AG04450 (cell line): ENCODE measurements at regions of chr7 and their contacts with region 1.

Region 1: DNA sequence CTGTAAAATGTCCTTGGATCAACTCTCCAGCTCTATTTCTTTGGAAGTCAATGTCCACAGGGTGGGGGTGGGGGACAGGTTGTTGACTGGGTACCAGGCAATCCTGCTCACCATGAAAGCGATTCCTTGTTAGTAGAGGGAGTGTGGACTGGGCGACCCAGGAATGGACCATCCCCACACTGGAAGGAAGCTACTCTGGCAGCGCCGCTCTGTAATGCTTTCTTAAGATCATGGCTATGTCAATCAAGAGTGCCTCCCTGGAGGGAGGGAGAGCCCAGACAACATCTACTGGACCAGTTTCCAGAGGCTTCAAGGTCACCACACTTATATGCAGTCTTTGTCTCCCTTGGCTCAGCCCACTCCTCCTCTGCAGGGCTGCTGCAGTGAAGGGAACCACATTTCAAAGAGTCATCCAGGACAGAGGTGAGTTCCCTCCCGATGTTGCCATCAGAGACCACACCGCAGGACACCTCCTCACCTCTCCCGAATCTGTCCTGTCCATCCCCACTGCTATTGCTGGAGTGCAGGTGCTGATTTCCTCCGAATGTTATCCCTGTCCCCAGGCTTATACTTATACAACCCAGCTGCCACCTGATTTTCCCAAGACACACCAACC is 6.9 kb downstream of the GIMAP5 start:
- DNase-seq: no peak
- H3K4me3 ChIP-seq: no peak overlapping the region
- H3K27ac ChIP-seq: no peak overlapping the region
- H3K27me3 ChIP-seq: no peaks in the 10 kb centered on the region
- CTCF ChIP-seq: no peak

Region 2: DNA sequence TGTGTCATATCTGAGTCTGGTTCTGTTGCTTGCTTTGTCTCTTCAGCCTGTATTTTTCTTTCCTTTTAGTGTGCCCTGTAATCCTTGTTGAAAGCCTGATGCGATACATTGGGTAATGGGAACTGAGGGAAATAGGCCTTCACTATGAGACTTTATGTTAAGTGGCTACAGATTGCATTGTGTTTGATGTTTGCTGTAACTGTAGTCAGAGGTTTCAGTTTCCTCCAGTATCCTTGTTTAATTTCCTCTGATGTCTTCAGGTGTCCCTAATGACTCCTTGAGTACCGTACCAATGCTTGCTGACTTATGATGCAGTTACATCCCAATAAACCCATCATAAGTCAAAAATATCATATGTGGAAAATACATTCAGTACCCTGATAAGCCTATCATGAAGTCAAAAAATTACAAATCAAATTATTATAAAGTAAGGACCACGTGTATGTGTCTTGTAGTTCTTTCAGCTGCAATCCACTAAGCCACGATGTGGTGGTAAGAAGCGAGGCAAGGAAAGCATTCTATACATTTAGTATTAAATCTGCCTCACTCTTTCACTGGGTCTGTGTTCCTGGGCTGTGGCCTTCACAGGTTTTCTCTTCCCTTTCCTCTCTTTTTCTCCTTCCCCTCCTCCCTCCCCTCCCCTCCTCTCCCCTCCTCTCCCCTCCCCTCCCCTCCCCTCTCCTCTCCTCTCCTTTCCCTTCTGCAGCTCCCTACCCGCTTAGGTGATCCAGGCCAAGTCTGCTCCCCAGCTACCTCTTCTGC is 98.7 kb before region 1 on chr7:
- CTCF ChIA-PET with region 1: no interaction called
- POLR2A ChIA-PET with region 1: no interaction called
- DNase-seq: no peak
- H3K4me3 ChIP-seq: no peak overlapping the region
- H3K27ac ChIP-seq: no peak overlapping the region
- H3K27me3 ChIP-seq: no peaks in the 10 kb centered on the region
- CTCF ChIP-seq: no peak

Region 3: DNA sequence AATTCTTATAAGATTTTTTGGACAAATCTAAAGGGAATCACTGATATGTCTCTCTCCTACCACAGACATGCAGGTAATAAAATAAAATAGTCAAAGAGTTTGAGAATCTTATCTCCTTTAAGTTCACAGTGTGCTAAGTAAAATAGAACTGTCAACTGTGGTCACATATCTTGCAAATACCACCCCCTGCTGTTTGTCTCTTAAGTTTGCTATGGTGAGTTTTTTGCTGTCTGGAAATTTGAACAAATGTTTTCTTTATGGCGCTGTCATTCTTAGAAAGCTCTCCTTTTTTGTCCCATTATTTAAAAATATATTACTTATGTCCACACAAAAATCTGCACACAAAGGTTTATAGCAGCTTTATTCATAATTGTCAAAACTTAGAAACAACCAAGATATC is 12.7 kb after region 1 on chr7:
- CTCF ChIA-PET with region 1: interaction called, 10 read pairs
- POLR2A ChIA-PET with region 1: no interaction called
- DNase-seq: no peak
- H3K4me3 ChIP-seq: no peak overlapping the region
- H3K27ac ChIP-seq: no peak overlapping the region
- H3K27me3 ChIP-seq: no peaks in the 10 kb centered on the region
- CTCF ChIP-seq: no peak; the same call in 1 of the 2 replicates